IMR-90 (cell line): ENCODE measurements at regions of chr12 and their contacts with region 1.

Region 1: DNA sequence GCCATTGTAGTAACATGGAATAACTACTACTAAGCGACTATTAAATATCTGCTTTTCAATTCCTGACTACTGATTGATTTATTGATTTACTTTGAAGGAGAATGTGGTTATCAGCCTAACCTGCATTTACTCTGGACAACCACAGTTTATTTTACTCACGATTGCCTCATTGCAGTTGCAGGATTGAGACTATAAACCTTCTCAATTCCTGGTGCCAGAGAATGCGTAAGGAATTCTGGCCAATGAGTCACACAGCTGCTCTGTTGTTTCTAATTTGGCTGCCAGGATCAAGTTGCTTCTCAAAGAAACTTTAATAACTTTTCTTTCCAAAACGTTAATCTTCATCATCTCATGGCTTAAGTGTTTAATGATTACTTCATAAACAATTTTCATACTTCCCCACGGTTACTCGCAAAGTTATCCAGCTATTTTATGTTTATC is 13.1 kb upstream of the TMTC1 start:
- DNase-seq: peak; percentile 97
- ATAC-seq: peak; percentile 93
- H3K4me3 ChIP-seq: no peak overlapping the region
- H3K27ac ChIP-seq: no peak overlapping the region
- H3K4me1 ChIP-seq: peaks cover 4% of the 10 kb centered on the region
- H3K27me3 ChIP-seq: peaks cover 20% of the 10 kb centered on the region
- CTCF ChIP-seq: no peak
- POLR2A ChIP-seq: no peak
- RAD21 ChIP-seq: no peak

Region 2: GRCh38 chr12:29691141-29691854 is 105.5 kb before region 1 on chr12:
- CTCF ChIA-PET with region 1: no interaction called
- POLR2A ChIA-PET with region 1: no interaction called
- dilution Hi-C with region 1: no loop called
- in situ Hi-C with region 1: no loop called
- intact Hi-C with region 1: no loop called
- DNase-seq: no peak
- ATAC-seq: no peak
- H3K4me3 ChIP-seq: no peak overlapping the region
- H3K27ac ChIP-seq: no peak overlapping the region
- H3K4me1 ChIP-seq: no peaks in the 10 kb centered on the region
- H3K27me3 ChIP-seq: no peaks in the 10 kb centered on the region
- CTCF ChIP-seq: no peak
- POLR2A ChIP-seq: no peak
- RAD21 ChIP-seq: no peak

Region 3: GRCh38 chr12:29769162-29769858 is 27.5 kb before region 1 on chr12:
- CTCF ChIA-PET with region 1: no interaction called
- POLR2A ChIA-PET with region 1: no interaction called
- dilution Hi-C with region 1: no loop called
- in situ Hi-C with region 1: no loop called
- intact Hi-C with region 1: no loop called
- DNase-seq: peak; percentile 94
- ATAC-seq: peak; percentile 81
- H3K4me3 ChIP-seq: no peak overlapping the region
- H3K27ac ChIP-seq: peak overlapping the region; percentile 51; the same call in 1 of the 2 replicates
- H3K4me1 ChIP-seq: peaks cover 15% of the 10 kb centered on the region
- H3K27me3 ChIP-seq: no peaks in the 10 kb centered on the region
- CTCF ChIP-seq: no peak
- POLR2A ChIP-seq: no peak
- RAD21 ChIP-seq: no peak

Region 4: GRCh38 chr12:29807125-29807524 is 10.3 kb after region 1 on chr12:
- CTCF ChIA-PET with region 1: no interaction called
- POLR2A ChIA-PET with region 1: no interaction called
- dilution Hi-C with region 1: no loop called
- in situ Hi-C with region 1: no loop called
- intact Hi-C with region 1: loop called (anchors 1 kb)
- DNase-seq: peak; percentile 74
- ATAC-seq: peak; percentile 90
- H3K4me3 ChIP-seq: no peak overlapping the region
- H3K27ac ChIP-seq: no peak overlapping the region
- H3K4me1 ChIP-seq: no peaks in the 10 kb centered on the region
- H3K27me3 ChIP-seq: no peaks in the 10 kb centered on the region
- CTCF ChIP-seq: no peak
- POLR2A ChIP-seq: no peak
- RAD21 ChIP-seq: no peak